ENCODE measurements at regions of chr20 and their contacts with region 1.

Region 1: DNA sequence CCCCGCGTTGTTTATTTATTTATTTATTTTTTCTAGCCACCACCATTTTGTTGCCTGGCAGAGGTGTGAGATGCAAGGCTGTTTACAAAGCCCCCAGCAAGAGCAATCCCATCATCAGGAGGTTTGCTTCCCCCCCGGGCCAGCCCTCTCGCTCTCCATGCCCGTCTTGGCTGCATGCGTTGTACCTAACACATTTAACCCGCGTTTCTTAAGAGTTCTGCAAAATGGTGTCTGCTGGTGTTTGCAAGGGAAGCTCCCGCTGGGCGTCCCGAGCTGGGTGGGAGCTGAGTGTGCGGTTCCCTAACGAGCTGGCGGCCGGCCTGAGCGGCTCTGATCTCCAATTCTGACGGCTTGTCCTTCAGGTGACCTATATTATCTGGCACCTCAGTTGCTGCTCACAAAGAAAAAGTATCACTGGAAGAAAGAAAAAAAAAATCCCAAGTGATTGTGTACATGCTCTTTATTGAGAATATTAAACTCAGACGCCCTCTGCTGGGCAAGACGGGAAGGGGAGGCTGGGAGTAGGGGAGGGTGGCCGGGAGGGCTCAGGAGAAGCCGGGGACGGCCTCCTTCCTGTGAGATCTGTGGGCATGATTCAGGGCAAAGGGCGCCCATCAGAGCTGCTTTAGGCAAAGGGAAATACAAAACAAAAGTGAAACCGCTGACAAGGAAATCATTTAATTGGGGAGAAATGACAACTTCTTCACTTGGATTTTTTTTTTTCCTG is 154.8 kb downstream of the BCAS1 start:
- DNase-seq: peak; percentile 84
- H3K4me3 Mint-ChIP-seq: peak overlapping the region; percentile 89
- H3K27ac Mint-ChIP-seq: peak overlapping the region; percentile 93
- H3K4me1 Mint-ChIP-seq: peaks cover 42% of the 10 kb centered on the region
- H3K27me3 Mint-ChIP-seq: no peaks in the 10 kb centered on the region

Region 2: DNA sequence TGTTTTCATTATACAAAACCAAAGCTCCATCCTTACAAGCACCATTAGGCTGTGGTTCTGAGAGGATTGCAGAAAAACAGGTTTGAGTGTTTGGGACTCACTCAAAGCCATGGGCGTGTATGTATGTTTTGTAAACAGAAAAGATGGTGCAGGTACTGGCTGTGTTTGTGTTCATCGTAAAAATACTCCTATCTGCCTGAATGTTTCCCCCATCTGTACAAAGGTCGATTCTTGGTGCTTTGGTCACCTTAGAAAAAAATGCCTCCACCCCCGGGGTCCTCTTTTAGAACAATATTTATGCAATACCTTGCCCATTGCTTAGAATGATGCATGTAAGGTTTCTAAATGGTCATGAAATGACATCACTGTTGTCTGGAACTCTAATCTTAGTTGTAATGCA is 656.8 kb before region 1 on chr20:
- intact Hi-C with region 1: no loop called
- DNase-seq: no peak
- H3K4me3 Mint-ChIP-seq: no peak overlapping the region
- H3K27ac Mint-ChIP-seq: no peak overlapping the region
- H3K4me1 Mint-ChIP-seq: no peaks in the 10 kb centered on the region
- H3K27me3 Mint-ChIP-seq: no peaks in the 10 kb centered on the region

Region 3: GRCh38 chr20:53643031-53643832 is 272.4 kb before region 1 on chr20:
- intact Hi-C with region 1: loop called (anchors 5 kb)
- DNase-seq: peak; percentile 66
- H3K4me3 Mint-ChIP-seq: peak overlapping the region; percentile 76
- H3K27ac Mint-ChIP-seq: peak overlapping the region; percentile 97
- H3K4me1 Mint-ChIP-seq: peaks cover 39% of the 10 kb centered on the region
- H3K27me3 Mint-ChIP-seq: no peaks in the 10 kb centered on the region

Region 4: DNA sequence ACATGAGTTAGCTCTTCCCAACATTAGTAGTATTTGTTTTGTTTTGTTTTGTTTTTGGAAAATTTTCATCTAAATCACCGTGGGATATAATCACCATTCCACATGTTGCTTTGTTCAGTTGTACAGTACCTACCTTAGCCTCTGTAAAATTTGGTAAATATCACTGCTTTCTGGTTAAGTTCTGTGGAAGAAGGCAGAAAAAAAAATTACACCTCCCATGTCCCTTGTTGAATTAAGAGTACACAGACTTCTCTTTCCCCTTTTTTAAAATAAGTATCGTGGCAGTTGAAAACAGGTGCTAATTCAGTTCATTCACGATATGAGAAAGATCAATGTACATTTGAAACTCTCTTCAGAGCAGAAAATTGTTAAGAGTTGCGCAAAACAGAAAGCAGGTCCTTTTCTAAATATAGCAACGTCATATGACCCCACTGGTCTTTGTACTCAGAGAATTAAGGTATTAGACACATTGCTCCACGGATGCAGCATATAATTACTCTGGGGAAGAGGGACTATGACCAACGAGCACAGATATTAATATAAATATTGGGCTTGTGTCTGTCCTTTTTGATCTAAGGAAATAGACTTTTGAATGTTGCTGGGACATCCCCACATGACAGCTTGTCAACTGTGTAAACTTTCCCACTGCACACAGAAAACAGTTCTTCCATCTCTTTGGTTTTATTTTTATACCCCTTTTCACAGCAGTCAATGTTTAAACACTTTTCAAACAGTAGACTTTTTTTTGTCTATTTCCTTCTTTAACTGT is 263.3 kb before region 1 on chr20:
- intact Hi-C with region 1: loop called (anchors 2 kb)
- DNase-seq: no peak
- H3K4me3 Mint-ChIP-seq: peak overlapping the region; percentile 70
- H3K27ac Mint-ChIP-seq: peak overlapping the region; percentile 97
- H3K4me1 Mint-ChIP-seq: peaks cover 41% of the 10 kb centered on the region
- H3K27me3 Mint-ChIP-seq: no peaks in the 10 kb centered on the region

Region 5: GRCh38 chr20:53828682-53829254 is 86.8 kb before region 1 on chr20:
- intact Hi-C with region 1: loop called (anchors 1 kb)
- DNase-seq: no peak
- H3K4me3 Mint-ChIP-seq: peak overlapping the region; percentile 84
- H3K27ac Mint-ChIP-seq: peak overlapping the region; percentile 90
- H3K4me1 Mint-ChIP-seq: peaks cover 48% of the 10 kb centered on the region
- H3K27me3 Mint-ChIP-seq: no peaks in the 10 kb centered on the region

Region 6: DNA sequence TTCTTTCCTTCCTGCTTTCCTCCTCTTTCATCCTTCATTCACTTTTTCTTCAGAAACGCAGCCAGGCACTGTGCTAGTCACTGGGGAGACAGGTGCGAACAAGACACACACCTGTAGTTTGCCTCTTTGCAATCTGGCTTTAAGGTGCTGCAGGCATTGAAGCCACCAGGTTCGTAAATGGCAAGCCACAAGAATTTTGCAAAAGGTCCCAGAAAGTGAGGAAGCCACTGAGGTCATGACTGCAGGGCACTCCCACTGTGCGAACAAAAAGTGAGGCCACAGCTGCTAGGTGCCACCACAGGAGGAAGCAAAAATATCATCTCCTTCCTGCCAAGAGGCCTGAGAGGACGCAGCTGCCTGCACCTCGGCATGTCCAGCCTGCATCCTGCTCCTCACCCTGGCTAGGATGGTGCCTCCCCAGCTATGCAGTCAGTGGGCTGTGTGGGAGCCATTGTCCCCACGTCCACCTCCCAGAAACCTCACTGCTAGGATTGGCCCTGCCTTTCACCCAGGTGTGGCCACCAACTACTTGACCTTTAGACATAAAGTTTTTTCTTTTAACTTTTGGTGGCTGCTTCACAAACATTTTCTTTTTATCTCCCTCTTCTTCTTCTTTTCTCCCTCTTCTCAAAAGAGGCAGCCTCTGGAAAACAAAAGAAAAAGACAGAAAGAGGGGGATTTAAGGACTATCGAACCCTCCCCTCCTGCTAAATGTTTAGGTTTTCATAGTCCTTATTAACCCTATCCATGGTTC is 76.0 kb before region 1 on chr20:
- intact Hi-C with region 1: no loop called
- DNase-seq: peak; percentile 62
- H3K4me3 Mint-ChIP-seq: peak overlapping the region; percentile 80
- H3K27ac Mint-ChIP-seq: peak overlapping the region; percentile 96
- H3K4me1 Mint-ChIP-seq: peaks cover 72% of the 10 kb centered on the region
- H3K27me3 Mint-ChIP-seq: peaks cover 2% of the 10 kb centered on the region

Region 7: DNA sequence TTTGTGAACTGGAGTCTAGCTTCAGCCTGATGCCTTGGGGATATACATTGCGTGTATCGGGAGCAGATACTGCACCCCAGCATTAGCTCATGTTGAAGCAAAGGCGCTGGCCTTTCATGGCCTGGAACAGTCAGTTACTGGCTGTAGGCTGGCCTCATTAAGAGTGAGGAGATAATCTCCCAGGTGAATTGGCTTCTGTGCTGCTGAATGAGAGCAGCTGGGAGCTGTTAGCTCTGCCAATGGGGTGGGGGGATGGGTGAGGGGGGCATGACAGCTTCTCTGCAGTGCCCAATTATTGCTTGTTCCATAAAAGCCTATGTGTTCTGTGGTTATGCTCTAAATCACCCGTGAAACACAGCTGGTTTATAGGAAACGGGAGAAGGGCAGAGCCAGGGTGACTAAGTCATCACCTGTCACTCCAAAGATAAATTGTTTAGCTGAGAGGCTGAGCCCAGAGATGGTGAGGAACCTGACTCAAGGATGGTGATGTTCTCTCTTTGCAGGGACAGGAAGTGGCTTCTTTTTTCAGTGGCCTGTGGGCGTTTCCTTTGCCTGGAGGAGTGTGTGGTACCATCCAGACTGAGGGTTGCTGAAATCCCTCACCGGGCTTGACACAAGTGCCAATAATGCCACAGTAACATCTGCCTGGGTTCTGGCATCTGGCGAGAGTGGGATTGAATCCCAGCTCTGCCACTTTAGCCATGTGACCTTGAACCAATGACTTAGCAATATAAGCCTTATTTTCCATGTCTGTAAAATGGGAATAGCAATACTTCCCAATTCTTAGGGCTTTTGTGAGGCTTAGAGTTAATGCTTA is 16.1 kb before region 1 on chr20:
- intact Hi-C with region 1: loop called (anchors 1 kb)
- DNase-seq: peak; percentile 74
- H3K4me3 Mint-ChIP-seq: peak overlapping the region; percentile 69
- H3K27ac Mint-ChIP-seq: peak overlapping the region; percentile 87
- H3K4me1 Mint-ChIP-seq: peaks cover 56% of the 10 kb centered on the region
- H3K27me3 Mint-ChIP-seq: no peaks in the 10 kb centered on the region